HepG2 (cell line): ENCODE measurements at regions of chr1 and their contacts with region 1.

Region 1: DNA sequence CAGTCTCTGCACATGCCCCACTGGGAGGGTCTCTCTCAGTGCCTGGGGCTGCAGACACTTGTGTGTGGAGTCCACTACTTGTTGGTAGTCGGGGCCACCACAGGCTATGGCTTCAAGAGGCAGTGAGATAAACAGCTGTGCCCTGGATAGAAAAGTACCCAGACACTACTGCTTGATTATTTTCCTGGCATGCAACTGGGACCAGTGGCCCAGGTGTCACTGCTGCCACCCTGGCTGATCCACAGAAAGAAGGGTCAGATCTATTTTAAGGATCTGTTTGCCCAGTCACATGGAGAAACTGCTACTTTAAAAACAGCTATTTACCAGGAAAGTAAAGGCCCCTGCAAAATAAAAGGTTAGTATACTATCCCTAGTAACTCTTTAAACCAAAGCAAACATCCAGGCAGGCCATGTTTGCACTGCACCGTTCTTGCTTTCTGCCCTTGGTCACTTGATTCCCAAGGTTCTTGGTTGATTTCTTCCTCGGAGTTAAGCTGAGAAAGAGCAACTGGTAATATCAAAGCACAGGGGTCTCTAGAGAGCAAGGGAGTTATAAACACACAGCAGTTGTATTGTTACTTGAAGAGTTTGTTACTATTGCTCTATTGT is 99.9 kb downstream of the GLUL start:
- DNase-seq: peak; percentile 87
- ATAC-seq: peak; percentile 70
- H3K4me3 ChIP-seq: peak overlapping the region; percentile 11 to 56 (median 41); a peak in 4 of 6 replicates
- H3K27ac ChIP-seq: peak overlapping the region; percentile 97
- H3K4me1 ChIP-seq: peaks cover 96% of the 10 kb centered on the region
- H3K27me3 ChIP-seq: no peaks in the 10 kb centered on the region
- CTCF ChIP-seq: no peak; the same call in 1 of the 2 replicates
- EP300 ChIP-seq: peak in 1 of 2 experiments; percentile 95; a peak in 2 of 4 replicates
- POLR2A ChIP-seq: no peak
- RAD21 ChIP-seq: no peak

Region 2: GRCh38 chr1:182143154-182143657 is 148.5 kb before region 1 on chr1:
- CTCF ChIA-PET with region 1: no interaction called
- POLR2A ChIA-PET with region 1: interaction called, 19 read pairs
- in situ Hi-C with region 1: no loop called
- intact Hi-C with region 1: no loop called
- DNase-seq: peak; percentile 71
- ATAC-seq: peak; percentile 90
- H3K4me3 ChIP-seq: peak overlapping the region in 1 of 3 experiments; percentile 30; a peak in 2 of 6 replicates
- H3K27ac ChIP-seq: no peak overlapping the region
- H3K4me1 ChIP-seq: peaks cover 51% of the 10 kb centered on the region
- H3K27me3 ChIP-seq: no peaks in the 10 kb centered on the region
- CTCF ChIP-seq: peak; percentile 95
- EP300 ChIP-seq: no peak
- POLR2A ChIP-seq: no peak
- RAD21 ChIP-seq: peak; percentile 92

Region 3: DNA sequence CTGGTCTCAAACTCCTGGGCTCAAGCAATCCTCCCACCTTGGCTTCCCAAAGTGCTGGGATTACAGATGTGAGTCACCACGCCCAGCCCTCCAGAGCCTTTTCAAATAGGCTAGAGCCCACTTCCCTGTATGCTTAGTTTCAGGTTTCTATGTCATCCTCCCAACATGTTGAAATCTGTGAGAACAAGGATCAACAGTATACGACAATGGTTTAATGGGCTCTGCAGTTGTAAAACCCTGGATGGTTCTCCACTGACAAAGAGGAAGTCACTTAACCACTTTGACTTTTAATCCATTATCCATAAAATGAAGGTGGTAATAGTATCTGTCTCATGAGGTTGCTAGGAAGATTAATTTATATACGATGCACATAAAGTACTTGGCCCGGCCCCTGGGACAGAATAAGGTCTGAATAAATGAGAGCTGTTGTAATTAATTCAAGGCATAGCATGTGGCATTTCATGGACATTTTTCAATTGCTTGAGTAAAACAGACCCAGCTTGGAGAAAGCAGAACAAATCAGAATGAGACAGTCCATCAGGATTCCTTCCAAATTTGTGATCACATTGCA is 116.2 kb before region 1 on chr1:
- CTCF ChIA-PET with region 1: no interaction called
- POLR2A ChIA-PET with region 1: no interaction called
- in situ Hi-C with region 1: no loop called
- intact Hi-C with region 1: no loop called
- DNase-seq: peak; percentile 63
- ATAC-seq: peak; percentile 68; the same call in 2 of the 3 replicates
- H3K4me3 ChIP-seq: no peak overlapping the region
- H3K27ac ChIP-seq: no peak overlapping the region
- H3K4me1 ChIP-seq: peaks cover 12% of the 10 kb centered on the region; the same call in 1 of the 2 replicates
- H3K27me3 ChIP-seq: no peaks in the 10 kb centered on the region
- CTCF ChIP-seq: no peak
- EP300 ChIP-seq: no peak
- POLR2A ChIP-seq: no peak
- RAD21 ChIP-seq: no peak

Region 4: GRCh38 chr1:182279724-182280503 is 11.8 kb before region 1 on chr1:
- CTCF ChIA-PET with region 1: no interaction called
- POLR2A ChIA-PET with region 1: interaction called, 50 read pairs
- in situ Hi-C with region 1: no loop called
- intact Hi-C with region 1: no loop called
- DNase-seq: peak; percentile 91
- ATAC-seq: peak; percentile 97
- H3K4me3 ChIP-seq: 0 out of 6 replicates have a peak overlapping the region, but pooled peaks of 1 of the 3 experiments have one; percentile 5
- H3K27ac ChIP-seq: peak overlapping the region; percentile 75
- H3K4me1 ChIP-seq: peaks cover 66% of the 10 kb centered on the region
- H3K27me3 ChIP-seq: no peaks in the 10 kb centered on the region
- CTCF ChIP-seq: no peak
- EP300 ChIP-seq: no peak; a peak in 2 of 4 replicates
- POLR2A ChIP-seq: no peak
- RAD21 ChIP-seq: no peak

Region 5: GRCh38 chr1:182340233-182340926 is 48.7 kb after region 1 on chr1:
- CTCF ChIA-PET with region 1: no interaction called
- POLR2A ChIA-PET with region 1: interaction called, 10 read pairs
- in situ Hi-C with region 1: no loop called
- intact Hi-C with region 1: no loop called
- DNase-seq: peak; percentile 37
- ATAC-seq: peak; percentile 81
- H3K4me3 ChIP-seq: peak overlapping the region; percentile 25 to 68 (median 38)
- H3K27ac ChIP-seq: no peak overlapping the region
- H3K4me1 ChIP-seq: peaks cover 56% of the 10 kb centered on the region
- H3K27me3 ChIP-seq: no peaks in the 10 kb centered on the region; a peak in 1 of 5 replicates
- CTCF ChIP-seq: no peak
- EP300 ChIP-seq: no peak
- POLR2A ChIP-seq: no peak
- RAD21 ChIP-seq: no peak

Region 6: GRCh38 chr1:182397771-182398393 is 106.2 kb after region 1 on chr1:
- CTCF ChIA-PET with region 1: no interaction called
- POLR2A ChIA-PET with region 1: interaction called, 118 read pairs
- in situ Hi-C with region 1: no loop called
- intact Hi-C with region 1: no loop called
- DNase-seq: no peak
- ATAC-seq: no peak
- H3K4me3 ChIP-seq: no peak overlapping the region
- H3K27ac ChIP-seq: no peak overlapping the region
- H3K4me1 ChIP-seq: peaks cover 38% of the 10 kb centered on the region
- H3K27me3 ChIP-seq: no peaks in the 10 kb centered on the region
- CTCF ChIP-seq: no peak
- EP300 ChIP-seq: no peak
- POLR2A ChIP-seq: no peak
- RAD21 ChIP-seq: no peak